Psoas muscle (tissue), 8 donors: ENCODE measurements at regions of chr22 and their contacts with region 1.

Region 1: GRCh38 chr22:46122511-46122971 is 27.8 kb upstream of the PPARA start:
- DNase-seq: peak; percentile 81 to 90
- ATAC-seq: peak; percentile 72 to 86 (median 77)
- H3K4me3 ChIP-seq: peak overlapping the region; percentile 33
- H3K27ac ChIP-seq: no peak overlapping the region
- H3K4me1 ChIP-seq: no peaks in the 10 kb centered on the region
- H3K27me3 ChIP-seq: no peaks in the 10 kb centered on the region
- CTCF ChIP-seq: peak; percentile 93

Region 2: DNA sequence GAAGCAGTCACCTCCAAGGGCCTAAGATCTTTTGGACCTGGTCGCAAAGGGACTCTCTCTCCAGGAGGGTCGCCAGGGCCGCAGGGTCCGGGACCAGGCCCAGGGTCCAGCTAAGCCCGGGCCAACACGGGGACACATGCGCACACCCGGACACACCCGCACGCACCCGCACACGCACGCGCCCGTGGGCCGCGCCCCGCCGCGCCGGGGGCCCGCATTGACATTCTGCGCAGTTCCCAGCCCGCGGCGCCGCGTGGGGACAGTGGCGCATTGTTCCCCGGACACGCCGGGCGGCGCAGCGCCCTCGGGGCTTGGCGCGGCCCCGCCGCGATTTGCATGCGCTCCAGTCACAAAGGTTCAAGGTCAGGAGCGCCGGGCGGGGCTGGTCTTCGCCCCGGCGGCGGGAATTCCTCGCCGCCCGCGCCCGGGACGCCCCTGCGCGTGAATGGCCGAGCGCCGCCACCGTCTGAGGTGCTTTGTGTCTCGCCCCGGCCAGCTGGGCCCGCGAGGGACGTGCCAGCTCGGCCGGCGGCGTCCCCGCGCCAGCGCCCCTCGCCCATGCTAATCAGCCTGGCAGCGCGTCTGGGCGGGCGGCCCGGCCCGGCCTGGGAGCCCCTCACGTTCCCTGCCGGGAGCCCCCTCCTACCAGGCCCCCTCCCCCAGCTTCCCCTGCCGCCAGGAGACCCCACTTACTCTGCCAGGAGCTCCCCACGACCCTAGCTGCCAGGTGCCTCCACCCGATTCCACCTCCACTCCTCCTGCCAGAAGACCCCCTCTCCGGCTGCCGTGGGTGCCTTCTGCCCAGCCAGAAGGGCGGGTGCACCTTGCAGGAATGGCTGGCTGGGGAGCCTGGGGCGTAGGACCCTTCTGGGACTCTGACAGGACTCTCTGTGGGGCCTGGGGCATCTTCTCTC is 95.1 kb before region 1 on chr22:
- intact Hi-C with region 1: no loop called
- DNase-seq: peak; percentile 72 to 88
- ATAC-seq: peak; percentile 72 to 91 (median 82)
- H3K4me3 ChIP-seq: peak overlapping the region; percentile 66
- H3K27ac ChIP-seq: peak overlapping the region; percentile 72
- H3K4me1 ChIP-seq: no peaks in the 10 kb centered on the region
- H3K27me3 ChIP-seq: no peaks in the 10 kb centered on the region
- CTCF ChIP-seq: peak; percentile 17

Region 3: DNA sequence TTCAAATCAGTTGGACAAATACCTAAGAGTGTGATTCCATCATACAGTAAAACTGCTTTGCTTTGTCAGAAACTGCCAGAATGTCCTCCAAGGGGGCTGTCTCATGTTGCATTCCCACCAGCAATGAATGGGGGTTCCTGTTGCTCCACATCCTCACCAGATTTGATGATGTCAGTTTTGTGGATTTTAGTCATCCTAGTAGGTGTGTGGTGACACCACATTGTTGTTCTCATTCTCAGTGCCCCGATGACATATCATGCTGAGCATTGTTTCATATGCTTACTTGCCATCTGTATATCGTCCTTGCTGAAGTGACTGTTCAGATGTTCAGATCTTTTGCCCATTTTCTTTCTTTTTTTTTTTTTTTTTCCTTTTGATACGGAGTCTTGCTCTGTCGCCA is 90.5 kb after region 1 on chr22:
- intact Hi-C with region 1: no loop called
- DNase-seq: no peak
- ATAC-seq: no peak
- H3K4me3 ChIP-seq: no peak overlapping the region
- H3K27ac ChIP-seq: no peak overlapping the region
- H3K4me1 ChIP-seq: no peaks in the 10 kb centered on the region
- H3K27me3 ChIP-seq: no peaks in the 10 kb centered on the region
- CTCF ChIP-seq: no peak

Region 4: GRCh38 chr22:46309526-46310085 is 187.1 kb after region 1 on chr22:
- intact Hi-C with region 1: loop called (anchors 1 kb)
- DNase-seq: no peak
- ATAC-seq: peak in 2 of 4 donors; percentile 29 to 31
- H3K4me3 ChIP-seq: no peak overlapping the region
- H3K27ac ChIP-seq: no peak overlapping the region
- H3K4me1 ChIP-seq: no peaks in the 10 kb centered on the region
- H3K27me3 ChIP-seq: no peaks in the 10 kb centered on the region
- CTCF ChIP-seq: no peak

Region 5: GRCh38 chr22:46317646-46318045 is 195.1 kb after region 1 on chr22:
- intact Hi-C with region 1: loop called (anchors 1 kb)
- DNase-seq: peak in 1 of 2 donors; percentile 30
- ATAC-seq: no peak
- H3K4me3 ChIP-seq: no peak overlapping the region
- H3K27ac ChIP-seq: no peak overlapping the region
- H3K4me1 ChIP-seq: no peaks in the 10 kb centered on the region
- H3K27me3 ChIP-seq: no peaks in the 10 kb centered on the region
- CTCF ChIP-seq: no peak

Region 6: DNA sequence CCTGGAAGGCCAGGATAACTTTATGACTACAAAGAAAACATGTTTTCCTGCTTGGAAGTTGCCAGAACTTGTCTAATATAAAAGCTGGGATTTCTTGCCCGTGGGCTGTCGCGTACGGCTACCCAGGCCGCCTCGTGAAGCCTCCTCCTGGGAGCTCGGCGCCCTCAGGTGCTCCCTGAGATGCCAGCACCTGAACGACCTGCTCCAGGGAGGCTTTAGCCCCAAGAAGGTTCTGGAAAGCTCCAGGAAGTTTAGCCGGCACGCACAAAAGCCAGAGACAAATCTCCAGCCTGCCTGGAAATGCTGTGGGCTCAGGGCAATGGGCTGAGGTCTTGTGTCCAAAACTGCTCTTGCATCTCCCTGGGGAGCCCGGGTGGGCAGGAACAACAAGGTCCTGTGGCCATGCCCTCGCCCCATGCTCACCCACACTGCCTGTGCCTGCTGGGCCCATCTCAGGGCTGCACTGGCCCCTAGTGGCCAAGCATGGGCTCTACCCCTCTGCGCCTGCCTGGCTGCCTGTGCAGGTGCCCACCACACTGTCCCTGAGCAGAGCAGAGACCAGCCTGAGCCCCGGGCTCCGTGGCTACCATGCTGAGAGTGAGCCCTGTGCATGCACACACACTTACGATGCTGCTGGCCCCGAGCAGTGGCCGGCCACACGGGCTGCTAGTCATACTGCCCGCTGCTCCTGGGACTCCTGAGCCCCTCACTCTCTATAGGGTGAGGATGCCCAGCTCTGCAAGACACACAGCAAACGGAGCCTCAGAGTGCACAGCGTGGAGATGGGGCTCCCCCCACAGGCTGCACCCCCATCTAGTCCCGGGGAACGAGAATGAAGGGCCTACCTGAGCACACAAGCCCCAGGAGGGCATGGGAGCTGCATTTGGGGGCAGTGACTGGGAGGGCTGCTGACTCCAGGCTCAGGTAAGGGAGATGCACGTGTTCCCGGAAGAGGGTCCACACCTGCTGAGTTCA is 419.8 kb after region 1 on chr22:
- intact Hi-C with region 1: loop called in 1 of 2 experiments (anchors 5 kb)
- DNase-seq: peak; percentile 72 to 80
- ATAC-seq: peak; percentile 89 to 93 (median 92)
- H3K4me3 ChIP-seq: no peak overlapping the region
- H3K27ac ChIP-seq: no peak overlapping the region
- H3K4me1 ChIP-seq: peaks cover 16% of the 10 kb centered on the region
- H3K27me3 ChIP-seq: peaks cover 0 to 26% (median 12%) of the 10 kb centered on the region in 3 donors
- CTCF ChIP-seq: peak; percentile 88